Caco-2 (cell line): ENCODE measurements at regions of chr21 and their contacts with region 1.

Region 1: DNA sequence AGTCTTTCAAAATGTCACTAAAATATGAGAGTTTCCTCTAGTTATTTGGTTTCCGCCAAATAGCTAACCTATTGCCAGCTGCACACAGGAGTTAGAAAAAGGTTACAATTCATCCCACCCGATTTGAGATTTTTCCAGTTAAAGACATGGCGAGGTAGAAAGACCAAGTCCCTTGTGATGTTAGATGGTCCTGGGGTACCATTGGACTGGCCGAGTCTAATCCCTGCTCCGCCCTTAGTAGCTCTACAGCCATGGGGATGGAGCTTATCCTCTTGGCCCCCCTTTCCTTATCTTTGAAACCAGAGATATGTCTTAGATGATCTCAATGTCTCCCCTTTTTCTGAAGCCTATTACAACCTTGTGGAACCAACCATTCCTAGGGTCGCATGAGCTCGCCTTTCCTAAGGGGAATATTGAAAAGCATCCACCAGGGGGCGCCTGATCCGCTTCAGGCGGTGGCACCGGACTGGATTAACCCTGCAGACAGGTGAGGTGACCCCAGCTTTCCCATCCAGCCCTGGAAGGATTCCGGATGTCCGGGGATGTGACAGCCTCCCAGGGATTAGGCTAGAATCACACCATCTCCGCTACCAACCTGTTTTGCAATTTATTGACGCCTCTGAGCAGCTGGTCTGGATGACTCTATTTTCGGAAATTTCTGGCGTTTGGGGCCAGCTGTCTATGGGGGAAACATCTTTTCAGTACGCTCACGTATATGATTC is 68.3 kb upstream of the SIM2 start:
- DNase-seq: peak; percentile 74 to 81
- H3K4me3 ChIP-seq: no peak overlapping the region
- H3K4me3 Mint-ChIP-seq: no peak overlapping the region
- H3K27ac Mint-ChIP-seq: no peak overlapping the region
- H3K4me1 ChIP-seq: no peaks in the 10 kb centered on the region
- H3K4me1 Mint-ChIP-seq: no peaks in the 10 kb centered on the region
- H3K27me3 ChIP-seq: no peaks in the 10 kb centered on the region
- H3K27me3 Mint-ChIP-seq: peaks cover 2% of the 10 kb centered on the region
- CTCF ChIP-seq: peak; percentile 66 to 87

Region 2: DNA sequence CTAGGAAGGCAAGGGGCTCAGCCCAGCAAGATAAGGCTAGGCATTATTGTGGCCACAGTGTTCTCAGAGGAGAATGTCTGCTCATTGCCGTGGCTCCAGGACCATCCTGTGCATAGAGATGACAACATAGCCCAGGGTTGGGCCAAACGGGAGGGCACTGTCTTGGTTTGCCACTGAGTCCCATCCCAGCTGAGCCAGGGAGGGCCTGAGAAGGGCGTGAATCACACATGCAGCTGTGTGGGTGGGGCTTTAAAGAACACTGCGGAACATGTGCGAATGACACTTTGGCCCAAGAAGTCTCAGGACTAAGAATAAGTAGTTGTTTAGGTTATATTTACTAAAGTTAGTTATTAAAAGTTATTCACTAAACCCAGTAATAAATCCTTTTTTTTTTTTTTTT is 226.9 kb before region 1 on chr21:
- CTCF ChIA-PET with region 1: no interaction called
- POLR2A ChIA-PET with region 1: interaction called, 15 read pairs
- intact Hi-C with region 1: no loop called
- DNase-seq: no peak
- H3K4me3 ChIP-seq: no peak overlapping the region
- H3K4me3 Mint-ChIP-seq: no peak overlapping the region
- H3K27ac Mint-ChIP-seq: no peak overlapping the region
- H3K4me1 ChIP-seq: no peaks in the 10 kb centered on the region
- H3K4me1 Mint-ChIP-seq: no peaks in the 10 kb centered on the region
- H3K27me3 ChIP-seq: no peaks in the 10 kb centered on the region
- H3K27me3 Mint-ChIP-seq: no peaks in the 10 kb centered on the region
- CTCF ChIP-seq: no peak

Region 3: GRCh38 chr21:36854391-36854790 is 223.7 kb after region 1 on chr21:
- CTCF ChIA-PET with region 1: interaction called, 9 read pairs
- POLR2A ChIA-PET with region 1: no interaction called
- intact Hi-C with region 1: loop called (anchors 1 kb)
- DNase-seq: peak in 1 of 2 experiments; percentile 66
- H3K4me3 ChIP-seq: no peak overlapping the region
- H3K4me3 Mint-ChIP-seq: no peak overlapping the region
- H3K27ac Mint-ChIP-seq: no peak overlapping the region
- H3K4me1 ChIP-seq: peaks cover 16% of the 10 kb centered on the region
- H3K4me1 Mint-ChIP-seq: peaks cover 7% of the 10 kb centered on the region
- H3K27me3 ChIP-seq: no peaks in the 10 kb centered on the region
- H3K27me3 Mint-ChIP-seq: no peaks in the 10 kb centered on the region
- CTCF ChIP-seq: peak; percentile 39 to 82

Region 4: GRCh38 chr21:36917471-36918158 is 287.0 kb after region 1 on chr21:
- CTCF ChIA-PET with region 1: interaction called, 23 read pairs
- POLR2A ChIA-PET with region 1: no interaction called
- intact Hi-C with region 1: loop called (anchors 5 kb)
- DNase-seq: peak; percentile 60 to 65
- H3K4me3 ChIP-seq: no peak overlapping the region
- H3K4me3 Mint-ChIP-seq: no peak overlapping the region
- H3K27ac Mint-ChIP-seq: no peak overlapping the region
- H3K4me1 ChIP-seq: peaks cover 17% of the 10 kb centered on the region
- H3K4me1 Mint-ChIP-seq: peaks cover 12% of the 10 kb centered on the region
- H3K27me3 ChIP-seq: no peaks in the 10 kb centered on the region
- H3K27me3 Mint-ChIP-seq: no peaks in the 10 kb centered on the region
- CTCF ChIP-seq: peak; percentile 69 to 82